AG04450 (cell line): ENCODE measurements at regions of chr20 and their contacts with region 1.

Region 1: DNA sequence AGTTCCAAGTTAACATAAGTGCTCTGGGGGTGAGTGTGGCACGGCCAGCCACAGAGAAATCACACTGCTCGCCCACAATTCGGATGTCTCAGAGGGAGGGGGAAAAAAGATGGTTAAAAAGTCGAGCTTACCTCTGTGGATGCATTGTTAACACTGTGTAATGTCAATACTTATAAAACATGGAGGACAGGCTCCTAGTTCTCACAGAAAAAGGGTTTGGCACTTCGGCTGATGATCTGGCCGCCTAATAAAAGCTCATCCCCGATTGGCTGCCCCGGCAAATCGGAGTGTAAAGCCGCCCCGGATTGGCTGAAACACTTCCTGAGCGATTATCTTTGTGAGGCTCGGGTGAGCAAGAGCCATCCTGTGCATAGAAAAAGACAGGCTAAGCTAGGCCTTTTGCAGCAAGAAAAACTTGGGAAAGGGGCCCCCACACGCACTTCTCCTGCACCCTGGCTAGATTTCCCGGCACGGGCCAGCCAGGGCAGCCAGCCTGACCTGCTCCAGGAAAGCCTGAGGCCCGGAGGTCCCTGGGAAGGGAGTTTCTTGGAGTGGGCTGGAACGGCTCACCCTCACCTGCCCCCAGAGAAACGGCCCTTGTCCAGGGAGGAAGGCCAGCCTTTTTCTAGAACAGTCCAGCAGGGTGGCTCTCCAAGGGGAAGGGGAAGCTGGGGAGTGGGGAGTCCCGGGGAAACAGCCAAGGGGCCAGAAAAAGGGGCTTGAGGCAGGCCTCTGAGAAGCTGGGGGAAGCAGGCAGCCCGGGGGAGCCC is at the start of gene ZMYND8:
- DNase-seq: peak; percentile 81
- H3K4me3 ChIP-seq: peak within 1 kb of the TSS; percentile 52
- H3K27ac ChIP-seq: peak within 1 kb of the TSS; percentile 99
- H3K27me3 ChIP-seq: no peaks in the 10 kb centered on the region
- CTCF ChIP-seq: no peak
- polyA plus RNA-seq, gene ZMYND8: 20.3 and 23.1 TPM in 2 replicates

Region 2: DNA sequence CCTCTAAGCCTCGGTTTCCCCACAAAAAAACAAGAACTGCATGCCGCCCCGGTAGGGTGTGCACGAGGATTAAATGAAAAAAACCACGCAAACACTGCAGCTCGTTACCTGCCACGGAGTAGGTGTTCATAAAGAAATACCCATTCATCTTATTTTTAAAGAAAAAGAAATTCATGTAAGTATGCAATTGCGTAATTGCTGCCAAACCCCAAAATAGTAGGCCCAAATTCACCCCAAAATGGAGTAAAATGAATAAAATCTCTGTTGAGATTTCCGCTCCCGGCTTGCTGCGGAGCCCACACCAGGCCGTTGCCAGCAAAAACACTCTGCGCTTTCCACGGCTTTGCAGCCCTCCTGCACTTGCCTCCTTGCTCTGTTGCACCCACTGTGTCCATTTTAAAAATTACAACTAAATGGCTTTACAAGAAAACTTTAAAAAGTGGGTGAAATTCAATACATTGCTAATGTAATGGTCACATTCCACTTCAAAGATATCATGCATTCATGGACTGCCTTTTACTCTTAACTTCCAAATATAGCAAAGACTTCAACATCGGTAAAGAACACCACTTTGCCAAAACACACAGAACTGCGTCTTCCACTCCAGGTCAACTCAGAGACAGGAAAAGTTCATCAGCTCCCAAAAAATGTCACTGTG is 125.2 kb before region 1 on chr20:
- CTCF ChIA-PET with region 1: no interaction called
- POLR2A ChIA-PET with region 1: no interaction called
- DNase-seq: peak; percentile 79
- H3K4me3 ChIP-seq: no peak overlapping the region
- H3K27ac ChIP-seq: peak overlapping the region; percentile 95
- H3K27me3 ChIP-seq: no peaks in the 10 kb centered on the region
- CTCF ChIP-seq: peak; percentile 56

Region 3: GRCh38 chr20:47265811-47266383 is 90.8 kb before region 1 on chr20:
- CTCF ChIA-PET with region 1: no interaction called
- POLR2A ChIA-PET with region 1: no interaction called
- DNase-seq: no peak
- H3K4me3 ChIP-seq: no peak overlapping the region
- H3K27ac ChIP-seq: no peak overlapping the region
- H3K27me3 ChIP-seq: no peaks in the 10 kb centered on the region
- CTCF ChIP-seq: no peak

Region 4: DNA sequence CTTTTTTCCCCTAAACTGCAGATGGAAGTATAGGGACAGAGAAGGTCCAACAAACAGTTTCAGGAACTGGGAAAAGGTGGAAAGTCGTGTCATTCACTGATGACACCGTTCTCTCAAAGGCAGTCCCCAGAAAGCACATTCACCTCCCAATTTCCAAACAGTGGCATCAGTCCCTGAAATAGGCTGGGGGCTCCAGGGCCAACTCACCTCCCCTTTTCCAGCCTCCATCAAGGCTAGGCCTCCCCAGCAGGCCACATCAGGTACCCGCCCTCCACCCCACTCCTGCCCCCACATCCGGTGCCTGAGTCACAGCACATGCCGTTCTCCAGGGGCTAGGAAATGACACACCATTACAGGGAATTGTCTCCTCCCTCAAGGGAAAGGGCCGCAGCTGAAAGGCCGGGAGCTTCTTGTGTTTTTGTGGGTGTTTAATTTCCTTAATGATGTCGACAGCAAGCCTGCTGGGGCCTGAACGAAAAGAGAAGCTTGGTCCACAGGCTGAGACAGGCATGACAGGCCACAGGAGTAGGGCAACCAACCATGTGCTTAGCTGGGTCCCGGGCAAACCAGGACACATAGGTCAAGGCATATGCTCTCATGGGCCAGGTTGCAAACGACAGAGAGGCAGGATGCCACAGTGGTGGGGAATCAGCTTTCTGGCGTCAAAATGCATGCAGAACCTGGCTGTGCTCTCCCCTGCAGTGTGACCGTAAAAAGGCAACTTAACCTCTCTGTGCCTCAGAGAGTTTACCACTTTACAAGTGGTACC is 39.4 kb before region 1 on chr20:
- CTCF ChIA-PET with region 1: no interaction called
- POLR2A ChIA-PET with region 1: interaction called, 14 read pairs
- DNase-seq: peak; percentile 88
- H3K4me3 ChIP-seq: no peak overlapping the region; the same call in 1 of the 2 replicates
- H3K27ac ChIP-seq: peak overlapping the region; percentile 98
- H3K27me3 ChIP-seq: no peaks in the 10 kb centered on the region
- CTCF ChIP-seq: no peak

Region 5: GRCh38 chr20:47330933-47331864 is 25.5 kb before region 1 on chr20:
- CTCF ChIA-PET with region 1: no interaction called
- POLR2A ChIA-PET with region 1: interaction called, 10 read pairs
- DNase-seq: no peak
- H3K4me3 ChIP-seq: no peak overlapping the region
- H3K27ac ChIP-seq: peak overlapping the region; percentile 86
- H3K27me3 ChIP-seq: no peaks in the 10 kb centered on the region
- CTCF ChIP-seq: no peak

Region 6: DNA sequence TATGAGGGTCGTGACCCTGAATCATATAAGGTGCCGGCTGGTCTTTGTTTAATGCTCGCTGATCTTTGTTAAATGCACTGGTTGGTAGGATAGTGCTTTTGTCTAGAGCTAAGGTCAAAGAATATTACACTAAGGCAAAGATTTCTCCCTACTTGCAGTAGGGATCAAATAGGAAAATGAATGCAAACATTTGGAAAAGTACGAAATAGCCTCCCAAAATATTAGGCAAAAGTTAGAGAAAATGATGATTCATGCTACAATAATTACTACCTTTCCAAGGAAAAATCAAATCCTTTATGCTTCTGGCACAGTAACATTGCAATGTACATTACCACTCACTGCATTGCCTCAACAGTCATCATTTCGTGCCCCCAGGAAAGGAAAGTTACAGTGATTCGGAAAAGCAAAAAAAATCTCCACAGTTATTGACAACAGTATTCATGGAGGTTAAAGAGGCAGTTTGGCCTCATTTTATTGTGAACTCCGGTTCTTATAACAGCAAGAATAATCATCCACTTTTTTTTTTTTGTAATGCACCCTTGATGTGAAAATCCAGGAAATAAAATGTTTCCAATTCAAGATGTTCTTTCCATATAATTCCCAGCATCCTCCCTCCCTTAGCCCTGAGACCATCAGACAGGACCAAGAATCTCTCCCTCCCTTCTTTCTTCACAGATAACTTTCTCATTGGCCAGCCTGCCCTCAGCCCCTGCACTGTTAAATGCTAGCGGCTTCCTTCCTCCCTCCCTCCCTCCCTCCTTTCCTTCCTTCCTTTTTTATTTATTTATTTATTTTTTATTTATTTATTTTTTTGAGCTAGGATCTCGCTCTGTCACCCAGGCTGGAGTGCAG is 61.6 kb after region 1 on chr20:
- CTCF ChIA-PET with region 1: no interaction called
- POLR2A ChIA-PET with region 1: no interaction called
- DNase-seq: no peak
- H3K4me3 ChIP-seq: no peak overlapping the region
- H3K27ac ChIP-seq: no peak overlapping the region
- H3K27me3 ChIP-seq: peaks cover 2% of the 10 kb centered on the region
- CTCF ChIP-seq: no peak